GM12878 (cell line): ENCODE measurements at regions of chr4 and their contacts with region 1.

Region 1: DNA sequence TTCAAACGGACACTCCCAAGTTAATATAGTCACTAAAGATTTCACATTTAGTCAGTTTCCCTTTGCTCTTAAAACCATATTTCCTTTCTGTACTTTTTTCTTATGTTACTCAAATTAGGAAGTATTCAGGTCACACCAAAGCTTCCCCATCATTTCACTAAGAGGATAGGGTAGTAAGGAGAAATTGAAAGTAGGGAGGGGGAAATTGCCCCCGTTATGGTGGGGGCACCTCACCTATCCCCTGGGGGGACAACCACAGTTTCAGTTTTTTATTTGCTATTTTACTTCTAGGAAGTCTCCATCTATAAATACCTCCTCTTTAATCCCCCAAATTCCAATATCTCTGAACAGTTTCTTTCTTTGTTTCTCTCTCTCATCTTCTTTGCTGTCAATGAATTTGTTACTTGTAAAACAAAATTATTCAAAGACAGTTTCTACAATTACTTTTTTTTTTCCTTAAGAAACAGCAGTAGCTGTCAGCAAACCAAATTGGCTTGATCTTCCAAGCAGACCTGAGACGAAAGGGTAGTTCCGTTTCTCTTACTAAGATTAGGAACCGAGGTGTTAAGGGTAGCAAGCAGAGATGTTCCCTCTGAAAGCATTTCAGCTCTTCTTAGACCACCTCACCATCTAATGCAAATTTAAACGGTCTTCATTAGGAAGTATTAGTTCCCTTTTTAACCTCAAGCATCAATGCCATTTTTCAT is 160.2 kb upstream of the KLF3 start:
- DNase-seq: peak; percentile 86
- ATAC-seq: peak; percentile 95
- H3K4me3 ChIP-seq: no peak overlapping the region; the same call in 1 of the 2 replicates
- H3K27ac ChIP-seq: peak overlapping the region; percentile 47
- H3K4me1 ChIP-seq: peaks cover 31% of the 10 kb centered on the region
- H3K27me3 ChIP-seq: no peaks in the 10 kb centered on the region
- CTCF ChIP-seq: no peak
- EP300 ChIP-seq: peak; percentile 59 to 83; a peak in 1 of 4 replicates
- POLR2A ChIP-seq: no peak
- RAD21 ChIP-seq: no peak; the same call in 1 of the 2 replicates

Region 2: GRCh38 chr4:38310446-38311043 is 193.3 kb before region 1 on chr4:
- CTCF ChIA-PET with region 1: interaction called, 6 read pairs
- POLR2A ChIA-PET with region 1: interaction called, 3 read pairs
- RAD21 ChIA-PET with region 1: interaction called, 9 read pairs
- SMC1A ChIA-PET with region 1: interaction called, 15 read pairs
- in situ Hi-C with region 1: no loop called
- intact Hi-C with region 1: no loop called
- DNase-seq: peak; percentile 97
- ATAC-seq: peak; percentile 91
- H3K4me3 ChIP-seq: no peak overlapping the region
- H3K27ac ChIP-seq: peak overlapping the region; percentile 77
- H3K4me1 ChIP-seq: peaks cover 61% of the 10 kb centered on the region
- H3K27me3 ChIP-seq: no peaks in the 10 kb centered on the region
- CTCF ChIP-seq: no peak
- EP300 ChIP-seq: peak; percentile 84 to 98
- POLR2A ChIP-seq: peak; percentile 39; the same call in 1 of the 2 replicates
- RAD21 ChIP-seq: peak; percentile 31

Region 3: DNA sequence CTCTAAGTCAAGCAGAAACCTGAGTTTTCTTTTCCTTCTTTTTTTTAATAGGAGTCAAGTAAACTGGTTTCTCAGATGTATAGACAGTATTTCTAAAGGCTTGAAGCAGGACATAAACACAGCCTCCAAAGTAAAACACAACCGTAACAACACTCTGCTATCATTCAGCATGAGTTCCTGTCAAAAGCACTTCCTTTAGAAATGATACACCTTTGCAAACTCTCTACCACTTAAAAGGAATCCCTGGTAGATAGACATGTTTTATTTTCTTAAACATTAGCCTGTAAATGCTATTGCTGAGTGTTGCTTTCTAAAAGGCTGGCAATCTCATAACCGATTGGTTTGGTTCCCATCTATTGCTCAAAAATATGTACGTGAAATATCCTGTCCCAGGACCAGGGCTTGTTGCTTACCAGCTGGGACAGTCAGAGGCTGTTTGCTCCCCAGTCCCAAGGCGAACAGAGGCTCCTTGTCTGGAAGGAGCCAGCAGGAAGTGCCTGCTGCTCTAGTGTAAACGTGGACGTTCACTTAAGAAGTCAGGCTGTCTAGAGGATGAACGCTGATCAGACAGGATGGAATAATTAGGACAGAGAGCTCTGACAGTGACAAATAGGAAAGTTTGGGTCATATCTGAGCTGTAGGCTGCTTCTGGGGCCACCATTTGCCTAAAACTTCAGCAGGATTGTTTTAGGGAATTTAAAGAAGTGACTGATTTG is 13.8 kb before region 1 on chr4:
- CTCF ChIA-PET with region 1: interaction called, 4 read pairs
- POLR2A ChIA-PET with region 1: interaction called, 3 read pairs
- RAD21 ChIA-PET with region 1: interaction called, 3 read pairs
- SMC1A ChIA-PET with region 1: interaction called, 11 read pairs
- in situ Hi-C with region 1: no loop called
- intact Hi-C with region 1: no loop called
- DNase-seq: no peak
- ATAC-seq: no peak
- H3K4me3 ChIP-seq: no peak overlapping the region
- H3K27ac ChIP-seq: no peak overlapping the region
- H3K4me1 ChIP-seq: no peaks in the 10 kb centered on the region
- H3K27me3 ChIP-seq: no peaks in the 10 kb centered on the region
- CTCF ChIP-seq: no peak
- EP300 ChIP-seq: no peak
- POLR2A ChIP-seq: no peak
- RAD21 ChIP-seq: no peak

Region 4: GRCh38 chr4:38560768-38561558 is 57.1 kb after region 1 on chr4:
- CTCF ChIA-PET with region 1: interaction called, 3 read pairs
- POLR2A ChIA-PET with region 1: interaction called, 4 read pairs
- RAD21 ChIA-PET with region 1: interaction called, 5 read pairs
- SMC1A ChIA-PET with region 1: no interaction called
- in situ Hi-C with region 1: no loop called
- intact Hi-C with region 1: loop called (anchors 2 kb)
- DNase-seq: peak; percentile 54
- ATAC-seq: peak; percentile 95
- H3K4me3 ChIP-seq: no peak overlapping the region
- H3K27ac ChIP-seq: no peak overlapping the region
- H3K4me1 ChIP-seq: peaks cover 21% of the 10 kb centered on the region
- H3K27me3 ChIP-seq: no peaks in the 10 kb centered on the region; a peak in 1 of 4 replicates
- CTCF ChIP-seq: no peak
- EP300 ChIP-seq: peak; percentile 24 to 66; a peak in 2 of 4 replicates
- POLR2A ChIP-seq: no peak
- RAD21 ChIP-seq: peak; percentile 33; the same call in 1 of the 2 replicates